ENCODE measurements at regions of chr3 and their contacts with region 1.

Region 1: DNA sequence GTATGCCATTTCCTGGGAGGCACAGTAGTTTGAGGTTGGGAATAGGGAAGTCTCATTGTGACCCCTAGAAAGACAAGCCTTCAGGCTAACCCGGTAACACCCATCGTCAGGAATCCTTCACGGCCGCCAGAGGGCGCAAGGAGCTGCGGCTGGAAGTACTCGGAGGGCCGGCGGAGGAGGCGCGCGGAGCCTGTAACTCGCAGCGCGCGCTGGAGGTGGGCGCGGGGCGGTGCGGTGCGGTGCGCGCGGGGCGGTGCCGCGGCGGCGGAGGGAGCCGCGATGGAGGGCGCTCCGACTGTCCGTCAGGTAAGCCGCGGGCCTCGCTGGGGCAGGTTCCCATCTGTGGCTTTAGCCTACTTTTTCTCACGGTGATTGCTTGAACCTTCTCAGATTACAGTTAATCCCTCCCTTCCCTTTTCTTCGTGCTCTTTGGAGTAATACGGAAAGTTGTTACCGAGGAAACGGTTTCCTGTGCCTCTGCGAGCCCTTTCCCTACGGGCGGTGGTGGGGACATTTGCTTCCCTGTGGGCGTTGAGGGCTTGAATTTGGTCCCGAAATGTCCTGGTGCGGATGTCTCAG is at the start of gene GRAMD1C:
- DNase-seq: peak; percentile 86
- H3K4me3 Mint-ChIP-seq: peak within 1 kb of the TSS; percentile 72
- H3K27ac Mint-ChIP-seq: no peak within 1 kb of the TSS
- H3K4me1 Mint-ChIP-seq: peaks cover 6% of the 10 kb centered on the region
- H3K27me3 Mint-ChIP-seq: peaks cover 4% of the 10 kb centered on the region
- total RNA-seq, gene GRAMD1C: 0.48 to 0.91 TPM

Region 2: DNA sequence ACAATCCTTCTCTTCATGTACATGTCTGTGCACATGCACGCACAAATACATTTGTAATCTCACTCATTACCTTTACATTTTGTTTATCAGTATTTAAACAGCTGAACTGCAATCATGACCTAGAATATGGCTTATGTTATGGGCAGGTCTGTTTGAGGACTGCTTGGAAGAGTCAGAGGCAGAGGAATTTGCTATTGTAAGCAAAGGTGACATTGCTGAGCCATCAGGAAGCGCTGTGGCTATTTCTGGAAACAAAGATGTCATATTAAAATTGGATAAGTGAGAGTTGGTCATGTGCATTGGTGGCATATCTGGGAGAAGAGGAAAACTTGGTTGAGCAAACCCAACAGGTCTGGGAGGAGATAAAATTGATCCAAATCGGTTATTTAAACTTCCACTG is 183.9 kb before region 1 on chr3:
- CTCF ChIA-PET with region 1: no interaction called
- POLR2A ChIA-PET with region 1: no interaction called
- DNase-seq: no peak
- H3K4me3 Mint-ChIP-seq: no peak overlapping the region
- H3K27ac Mint-ChIP-seq: no peak overlapping the region
- H3K4me1 Mint-ChIP-seq: no peaks in the 10 kb centered on the region
- H3K27me3 Mint-ChIP-seq: no peaks in the 10 kb centered on the region

Region 3: DNA sequence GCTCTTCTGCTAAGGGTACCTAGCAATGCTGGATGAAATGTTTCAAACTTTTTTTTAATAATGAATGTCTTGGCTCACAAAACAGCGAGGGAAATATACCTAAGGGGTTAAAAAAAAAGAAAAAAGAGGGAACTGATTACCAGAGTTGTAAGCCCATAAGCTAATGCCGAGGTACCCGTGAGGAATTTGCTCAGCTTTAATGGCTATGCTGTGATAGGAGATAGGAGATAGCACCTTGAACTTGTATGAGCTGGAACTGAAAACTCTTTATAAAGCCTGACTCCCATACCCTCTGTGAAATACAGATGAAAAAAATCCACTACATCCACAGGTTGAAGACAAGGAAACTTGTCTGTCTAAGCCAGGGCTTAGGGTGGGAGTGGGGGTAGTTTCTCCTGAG is 13.8 kb after region 1 on chr3:
- CTCF ChIA-PET with region 1: interaction called, 12 read pairs
- POLR2A ChIA-PET with region 1: no interaction called
- DNase-seq: no peak
- H3K4me3 Mint-ChIP-seq: no peak overlapping the region
- H3K27ac Mint-ChIP-seq: no peak overlapping the region
- H3K4me1 Mint-ChIP-seq: no peaks in the 10 kb centered on the region
- H3K27me3 Mint-ChIP-seq: peaks cover 9% of the 10 kb centered on the region

Region 4: GRCh38 chr3:114043205-114043604 is 204.5 kb after region 1 on chr3:
- CTCF ChIA-PET with region 1: no interaction called
- POLR2A ChIA-PET with region 1: no interaction called
- DNase-seq: no peak
- H3K4me3 Mint-ChIP-seq: no peak overlapping the region
- H3K27ac Mint-ChIP-seq: no peak overlapping the region
- H3K4me1 Mint-ChIP-seq: no peaks in the 10 kb centered on the region
- H3K27me3 Mint-ChIP-seq: no peaks in the 10 kb centered on the region